WTC11 (cell line): ENCODE measurements at regions of chr2 and their contacts with region 1.

Region 1: DNA sequence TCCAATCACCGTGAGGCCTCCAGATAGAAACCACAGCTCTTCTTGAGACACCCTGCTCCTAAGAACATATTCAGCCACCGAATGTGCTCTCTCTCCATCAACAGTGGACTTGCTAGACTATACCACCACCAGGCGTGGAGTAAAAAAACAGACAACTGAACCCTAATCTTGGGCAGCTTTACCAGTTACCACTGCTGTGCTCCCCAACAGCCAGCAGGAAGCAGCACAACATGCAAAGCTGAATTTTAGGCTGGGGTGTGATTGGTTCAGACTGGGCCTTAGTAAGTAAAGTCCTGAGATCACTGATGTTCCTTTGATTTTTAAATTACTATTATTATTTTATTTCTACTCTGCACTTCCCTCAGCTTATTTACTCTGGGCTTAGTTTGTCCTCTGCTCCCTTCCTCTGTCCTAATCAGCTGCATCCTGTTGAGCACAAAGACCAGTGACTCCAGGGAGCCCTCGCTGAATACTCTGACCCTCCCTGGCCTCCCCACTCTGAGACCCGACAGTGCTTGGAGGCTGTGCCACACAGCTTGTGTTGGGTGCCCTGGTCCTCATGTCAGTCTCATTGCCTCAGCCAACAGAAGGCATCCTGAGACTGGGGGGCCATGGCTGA is 21.9 kb downstream of the MRPL35 start:
- DNase-seq: peak; percentile 67
- ATAC-seq: peak; percentile 82
- H3K4me3 Mint-ChIP-seq: no peak overlapping the region
- H3K27ac Mint-ChIP-seq: no peak overlapping the region
- H3K4me1 Mint-ChIP-seq: peaks cover 28% of the 10 kb centered on the region
- H3K27me3 Mint-ChIP-seq: no peaks in the 10 kb centered on the region
- CTCF ChIP-seq: peak; percentile 85

Region 2: GRCh38 chr2:86185517-86186212 is 35.5 kb before region 1 on chr2:
- CTCF ChIA-PET with region 1: no interaction called
- POLR2A ChIA-PET with region 1: no interaction called
- DNase-seq: no peak
- ATAC-seq: no peak
- H3K4me3 Mint-ChIP-seq: no peak overlapping the region
- H3K27ac Mint-ChIP-seq: peak overlapping the region; percentile 25; the same call in 1 of the 2 replicates
- H3K4me1 Mint-ChIP-seq: peaks cover 22% of the 10 kb centered on the region
- H3K27me3 Mint-ChIP-seq: no peaks in the 10 kb centered on the region
- CTCF ChIP-seq: no peak

Region 3: DNA sequence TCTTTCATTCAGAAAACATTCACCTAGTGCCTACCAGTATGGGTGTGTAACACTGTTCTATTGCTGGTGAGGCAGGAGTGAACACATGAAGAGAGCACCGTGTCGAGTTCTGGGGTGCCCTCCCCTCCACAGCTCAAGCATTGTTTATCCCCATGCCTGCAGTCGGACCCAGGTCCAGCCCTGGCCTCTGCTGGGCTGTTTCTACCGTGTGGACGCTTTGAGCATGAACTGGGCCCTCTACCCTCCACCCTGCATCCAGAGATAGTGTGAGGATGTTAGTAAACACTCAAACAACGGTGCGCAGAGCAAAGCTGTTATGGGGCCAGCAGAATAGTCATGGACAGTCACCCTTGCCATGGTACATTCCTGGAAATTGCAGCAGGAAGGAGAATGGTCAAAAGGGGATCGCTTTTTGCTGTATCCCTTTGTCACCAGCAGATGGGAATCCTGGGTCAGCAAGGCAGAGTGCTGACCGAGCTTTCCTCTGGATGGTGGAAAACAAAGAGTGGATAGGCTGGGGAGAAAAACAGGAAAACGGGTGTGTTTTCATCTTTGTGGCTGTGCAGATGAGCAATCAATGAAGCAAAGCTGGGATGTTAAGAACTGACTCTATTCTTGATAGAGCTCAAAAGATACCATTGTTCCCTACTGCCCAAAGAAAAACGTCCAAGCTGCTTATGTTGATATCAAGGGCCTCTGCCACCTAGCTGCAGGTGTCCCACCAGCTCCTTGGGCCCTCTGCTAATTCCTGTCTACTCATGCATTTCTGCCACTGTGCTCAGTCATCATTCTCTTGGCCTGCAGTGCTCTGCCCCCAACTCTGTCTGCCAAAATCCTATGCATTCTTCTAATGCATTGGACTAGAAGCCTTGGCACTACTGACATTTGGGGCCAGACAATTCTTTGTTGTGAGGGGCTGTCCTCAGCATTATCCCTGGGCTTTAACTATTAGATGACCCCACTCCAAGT is 77.5 kb after region 1 on chr2:
- CTCF ChIA-PET with region 1: interaction called, 52 read pairs
- POLR2A ChIA-PET with region 1: no interaction called
- DNase-seq: peak; percentile 20
- ATAC-seq: peak; percentile 75
- H3K4me3 Mint-ChIP-seq: no peak overlapping the region
- H3K27ac Mint-ChIP-seq: no peak overlapping the region
- H3K4me1 Mint-ChIP-seq: peaks cover 9% of the 10 kb centered on the region; the same call in 1 of the 2 replicates
- H3K27me3 Mint-ChIP-seq: no peaks in the 10 kb centered on the region
- CTCF ChIP-seq: no peak

Region 4: DNA sequence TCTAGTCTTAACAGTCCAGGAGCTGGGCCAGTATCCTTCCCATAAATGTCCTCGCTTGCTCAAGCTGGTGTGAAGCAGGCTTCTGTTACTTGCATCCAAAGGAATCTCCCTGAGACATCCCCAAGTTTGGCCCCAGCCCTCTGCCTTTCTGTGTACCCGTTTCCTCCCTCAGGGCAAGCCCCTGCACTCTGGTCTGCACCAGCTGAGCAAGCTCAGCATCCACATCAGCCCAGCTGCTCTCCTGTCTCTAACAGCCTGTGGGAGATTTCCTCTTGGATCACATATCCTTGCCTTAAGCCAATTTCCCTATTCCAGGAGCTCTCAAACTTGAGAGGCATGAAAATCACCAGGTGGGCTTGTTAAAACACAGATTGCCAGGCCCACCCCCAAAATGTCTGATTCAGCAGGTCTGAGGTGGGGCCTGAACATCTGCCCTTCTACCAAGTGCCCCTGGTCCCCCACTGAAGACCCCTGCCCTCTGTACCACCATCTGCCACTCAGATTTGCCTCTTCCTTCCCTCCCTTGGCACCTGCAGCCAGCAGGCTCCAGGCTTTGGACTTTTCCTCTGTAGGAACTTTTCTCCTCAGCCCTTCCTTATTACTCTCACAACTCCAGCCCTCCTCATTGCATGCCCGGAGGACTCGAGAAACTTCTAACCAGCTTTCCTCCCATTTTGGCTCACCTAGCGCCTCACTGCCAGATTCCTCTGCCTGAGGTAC is 84.2 kb after region 1 on chr2:
- CTCF ChIA-PET with region 1: interaction called, 52 read pairs
- POLR2A ChIA-PET with region 1: no interaction called
- DNase-seq: no peak
- ATAC-seq: no peak
- H3K4me3 Mint-ChIP-seq: no peak overlapping the region
- H3K27ac Mint-ChIP-seq: no peak overlapping the region
- H3K4me1 Mint-ChIP-seq: peaks cover 10% of the 10 kb centered on the region
- H3K27me3 Mint-ChIP-seq: no peaks in the 10 kb centered on the region
- CTCF ChIP-seq: no peak